ENCODE measurements at regions of chr15 and their contacts with region 1.

Region 1: GRCh38 chr15:66851226-66852071 is 149.4 kb downstream of the SMAD6 start:
- DNase-seq: peak; percentile 78
- H3K4me3 ChIP-seq: no peak overlapping the region
- H3K27ac ChIP-seq: no peak overlapping the region
- H3K4me1 ChIP-seq: peaks cover 14% of the 10 kb centered on the region
- H3K27me3 ChIP-seq: no peaks in the 10 kb centered on the region
- CTCF ChIP-seq: peak; percentile 91 to 99
- POLR2A ChIP-seq: peak; percentile 37

Region 2: DNA sequence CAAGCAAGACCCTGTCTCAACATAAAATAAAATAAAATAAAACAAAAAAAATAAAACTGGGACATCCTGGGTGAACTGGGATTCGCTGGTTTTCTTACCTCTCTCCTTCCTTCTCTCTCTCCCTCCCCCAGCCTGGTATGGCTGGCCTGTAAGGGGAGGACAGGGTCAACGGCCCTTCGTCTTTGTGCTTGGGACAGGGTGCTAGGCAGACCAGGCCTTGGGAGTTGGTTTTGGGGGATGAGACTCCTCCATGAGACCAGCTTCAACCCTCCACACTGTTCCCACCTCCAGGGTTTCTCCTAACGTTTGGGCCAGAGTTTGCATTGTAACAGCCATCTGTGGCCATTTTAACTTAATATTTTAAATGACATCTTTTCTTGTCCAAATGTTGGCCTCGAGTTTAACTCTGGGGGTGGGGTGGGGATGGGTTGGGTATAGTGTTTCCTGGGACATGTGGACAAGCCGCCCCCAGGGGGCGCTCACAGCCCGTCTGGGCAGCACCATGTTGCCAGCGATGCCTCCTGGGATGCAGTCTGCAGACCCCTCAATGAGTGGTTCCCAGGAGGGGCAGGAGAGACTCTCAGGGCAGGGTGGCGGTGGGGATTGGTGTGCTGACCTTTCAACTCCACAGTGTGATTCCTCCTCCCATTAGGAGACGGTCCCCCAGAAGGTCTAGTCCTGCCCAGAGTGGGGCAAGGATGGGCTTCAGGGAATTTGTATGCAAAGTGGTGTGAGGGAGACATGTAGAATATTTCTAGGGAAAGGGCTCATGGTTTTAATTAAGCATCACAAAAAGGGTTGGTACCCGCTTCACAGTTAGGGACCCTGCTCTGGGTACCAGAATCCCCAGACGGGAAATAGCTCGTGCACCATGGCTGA is 247.9 kb before region 1 on chr15:
- CTCF ChIA-PET with region 1: interaction called, 152 read pairs
- POLR2A ChIA-PET with region 1: no interaction called
- dilution Hi-C with region 1: no loop called
- intact Hi-C with region 1: loop called (anchors 1 kb)
- DNase-seq: peak; percentile 65
- H3K4me3 ChIP-seq: no peak overlapping the region
- H3K27ac ChIP-seq: no peak overlapping the region
- H3K4me1 ChIP-seq: no peaks in the 10 kb centered on the region
- H3K27me3 ChIP-seq: no peaks in the 10 kb centered on the region
- CTCF ChIP-seq: peak; percentile 75 to 93
- POLR2A ChIP-seq: no peak

Region 3: GRCh38 chr15:66707310-66708082 is 144.0 kb before region 1 on chr15:
- CTCF ChIA-PET with region 1: interaction called, 157 read pairs
- POLR2A ChIA-PET with region 1: interaction called, 8 read pairs
- dilution Hi-C with region 1: no loop called
- intact Hi-C with region 1: loop called (anchors 1 kb)
- DNase-seq: peak; percentile 54
- H3K4me3 ChIP-seq: no peak overlapping the region
- H3K27ac ChIP-seq: peak overlapping the region; percentile 15
- H3K4me1 ChIP-seq: peaks cover 40% of the 10 kb centered on the region
- H3K27me3 ChIP-seq: no peaks in the 10 kb centered on the region
- CTCF ChIP-seq: peak in 1 of 2 donors; percentile 40
- POLR2A ChIP-seq: peak; percentile 15

Region 4: DNA sequence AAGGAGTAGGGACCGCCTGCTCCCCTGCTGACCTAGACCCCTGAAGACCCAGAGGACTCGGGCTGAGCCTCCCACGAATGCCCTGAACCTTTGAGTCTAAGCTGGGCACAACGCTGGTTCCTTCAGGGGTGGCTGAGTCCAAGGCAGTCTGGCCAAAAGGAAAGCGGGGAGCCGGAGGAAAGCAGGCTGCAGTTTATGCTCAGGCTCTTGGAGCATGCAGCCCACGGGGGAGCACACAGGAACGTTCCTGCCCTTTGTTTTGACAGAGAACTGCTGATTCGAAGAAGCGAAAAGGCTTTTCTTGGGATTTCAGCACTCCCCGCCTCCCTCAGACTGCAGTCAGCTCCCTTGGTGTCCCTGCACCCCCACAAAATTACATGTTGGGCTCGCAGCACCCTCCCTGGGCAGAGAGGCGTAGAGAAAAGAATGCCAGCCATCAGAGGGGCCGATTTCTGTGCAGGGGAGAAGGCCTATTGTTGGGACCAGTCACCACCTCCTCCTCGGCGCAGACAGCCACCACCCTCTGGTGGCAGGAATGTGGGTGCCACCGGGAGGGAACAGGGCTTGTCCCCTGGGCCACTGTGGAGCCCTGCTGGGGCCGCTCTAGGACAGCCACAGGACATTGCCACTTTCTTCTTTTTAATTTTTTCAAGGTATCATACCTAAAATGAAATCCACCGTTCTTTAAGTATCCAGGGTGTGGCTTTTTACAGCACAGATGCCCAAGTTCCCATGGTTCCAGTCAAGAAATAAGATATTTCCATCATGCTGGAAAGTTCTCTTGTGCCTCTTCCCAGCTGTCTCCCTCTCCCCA is 77.2 kb before region 1 on chr15:
- CTCF ChIA-PET with region 1: interaction called, 80 read pairs
- POLR2A ChIA-PET with region 1: no interaction called
- dilution Hi-C with region 1: no loop called
- intact Hi-C with region 1: loop called (anchors 1 kb)
- DNase-seq: peak; percentile 80
- H3K4me3 ChIP-seq: no peak overlapping the region
- H3K27ac ChIP-seq: peak overlapping the region; percentile 25
- H3K4me1 ChIP-seq: peaks cover 21% of the 10 kb centered on the region
- H3K27me3 ChIP-seq: no peaks in the 10 kb centered on the region
- CTCF ChIP-seq: peak; percentile 92 to 96
- POLR2A ChIP-seq: no peak

Region 5: DNA sequence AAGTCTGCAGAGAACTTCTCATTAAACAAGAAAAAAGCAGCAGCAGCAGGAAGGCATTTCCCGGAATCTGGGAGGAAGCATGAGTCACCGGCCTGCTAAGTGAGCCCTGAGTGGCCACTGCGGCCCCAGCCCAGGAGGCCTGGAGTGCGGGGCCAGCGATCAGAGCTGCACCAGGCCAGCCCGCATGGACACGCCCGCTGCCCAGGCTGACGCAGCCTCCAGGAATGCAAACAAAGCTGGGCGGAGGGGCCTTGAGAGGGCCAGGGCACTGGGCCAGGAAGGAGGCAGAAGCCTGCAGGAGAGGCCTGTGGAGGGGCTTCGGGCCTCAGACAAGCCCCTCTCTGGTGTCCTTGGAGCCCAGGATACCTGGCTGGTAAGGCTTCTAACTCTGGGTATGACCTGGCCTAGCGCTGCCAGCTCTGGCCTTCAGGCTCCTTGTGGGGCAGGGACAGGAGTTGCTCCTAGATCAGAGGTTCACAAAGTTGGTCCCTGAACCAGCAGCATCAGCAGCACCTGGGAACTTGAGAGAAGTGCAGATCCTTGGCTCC is 48.2 kb before region 1 on chr15:
- CTCF ChIA-PET with region 1: interaction called, 24 read pairs
- POLR2A ChIA-PET with region 1: interaction called, 3 read pairs
- dilution Hi-C with region 1: no loop called
- intact Hi-C with region 1: loop called (anchors 1 kb)
- DNase-seq: peak; percentile 98
- H3K4me3 ChIP-seq: no peak overlapping the region
- H3K27ac ChIP-seq: peak overlapping the region; percentile 97
- H3K4me1 ChIP-seq: peaks cover 31% of the 10 kb centered on the region
- H3K27me3 ChIP-seq: no peaks in the 10 kb centered on the region
- CTCF ChIP-seq: no peak
- POLR2A ChIP-seq: peak; percentile 27